GM10248 (cell line): ENCODE measurements at regions of chr2 and their contacts with region 1.

Region 1: GRCh38 chr2:97931118-97931857 is 64.5 kb downstream of the TMEM131 start:
- DNase-seq: peak; percentile 22
- CTCF ChIP-seq: no peak

Region 2: DNA sequence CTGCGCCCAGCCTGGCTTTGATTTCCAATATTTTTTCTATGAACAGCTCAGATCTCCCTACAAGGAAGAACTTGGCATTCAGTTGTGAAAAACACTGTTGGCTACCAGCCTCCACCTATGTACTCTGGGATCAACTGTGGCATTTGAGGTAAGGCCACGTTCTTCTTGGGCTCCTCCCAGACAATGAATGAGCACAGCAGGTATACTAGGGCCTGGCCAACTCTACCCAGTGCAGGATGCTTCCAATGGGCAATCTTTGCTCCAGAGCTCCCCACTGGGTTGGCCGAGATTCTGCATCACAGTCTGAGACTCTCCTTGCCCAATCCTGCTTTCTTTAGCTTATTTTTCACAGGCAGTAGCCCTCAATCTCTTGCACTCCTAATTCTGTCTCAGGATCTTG is 11.4 kb before region 1 on chr2:
- CTCF ChIA-PET with region 1: interaction called, 11 read pairs
- POLR2A ChIA-PET with region 1: no interaction called
- DNase-seq: no peak
- CTCF ChIP-seq: no peak

Region 3: DNA sequence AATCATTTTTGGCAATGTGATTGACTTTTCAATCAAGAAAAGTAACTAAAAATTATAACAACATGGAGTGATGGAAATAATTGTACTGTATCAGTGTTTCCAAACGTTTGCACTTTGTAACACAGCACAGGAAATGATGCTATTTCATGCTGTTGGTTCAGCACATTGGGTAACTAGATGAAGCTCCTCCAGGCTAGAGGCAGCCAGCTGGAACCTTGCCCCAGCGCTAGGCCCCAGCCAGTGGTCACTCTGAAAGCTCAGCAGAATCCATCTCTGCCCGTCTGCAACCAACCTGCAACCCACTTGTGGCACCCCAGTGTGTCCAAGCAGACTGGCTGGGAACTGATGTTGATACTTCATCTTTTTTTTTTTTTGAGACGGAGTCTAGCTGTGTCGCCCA is 692.4 kb after region 1 on chr2:
- CTCF ChIA-PET with region 1: no interaction called
- POLR2A ChIA-PET with region 1: no interaction called
- DNase-seq: no peak
- CTCF ChIP-seq: no peak